Colonic mucosa (tissue), 4 donors: ENCODE measurements at regions of chr5 and their contacts with region 1.

Region 1: GRCh38 chr5:16679863-16680262 is 63.1 kb upstream of the RETREG1 start:
- DNase-seq: no peak
- H3K4me3 ChIP-seq: no peak overlapping the region
- H3K27ac ChIP-seq: no peak overlapping the region
- H3K4me1 ChIP-seq: no peaks in the 10 kb centered on the region
- H3K27me3 ChIP-seq: no peaks in the 10 kb centered on the region
- CTCF ChIP-seq: no peak

Region 2: GRCh38 chr5:16350816-16351215 is 329.0 kb before region 1 on chr5:
- intact Hi-C with region 1: no loop called
- DNase-seq: no peak
- H3K4me3 ChIP-seq: no peak overlapping the region
- H3K27ac ChIP-seq: no peak overlapping the region
- H3K4me1 ChIP-seq: no peaks in the 10 kb centered on the region
- H3K27me3 ChIP-seq: no peaks in the 10 kb centered on the region
- CTCF ChIP-seq: no peak

Region 3: GRCh38 chr5:16759147-16759773 is 79.4 kb after region 1 on chr5:
- intact Hi-C with region 1: loop called (anchors 10 kb)
- DNase-seq: no peak
- H3K4me3 ChIP-seq: no peak overlapping the region
- H3K27ac ChIP-seq: no peak overlapping the region
- H3K4me1 ChIP-seq: no peaks in the 10 kb centered on the region
- H3K27me3 ChIP-seq: no peaks in the 10 kb centered on the region
- CTCF ChIP-seq: no peak